Activated CD4-positive, alpha-beta memory T cell treated with anti-CD3 and anti-CD28 coated beads, Interleukin-2, amount 10 ng/mL, durations not matched to agents 7 days and 5 days (primary cell): ENCODE measurements at regions of chr2 and their contacts with region 1.

Region 1: DNA sequence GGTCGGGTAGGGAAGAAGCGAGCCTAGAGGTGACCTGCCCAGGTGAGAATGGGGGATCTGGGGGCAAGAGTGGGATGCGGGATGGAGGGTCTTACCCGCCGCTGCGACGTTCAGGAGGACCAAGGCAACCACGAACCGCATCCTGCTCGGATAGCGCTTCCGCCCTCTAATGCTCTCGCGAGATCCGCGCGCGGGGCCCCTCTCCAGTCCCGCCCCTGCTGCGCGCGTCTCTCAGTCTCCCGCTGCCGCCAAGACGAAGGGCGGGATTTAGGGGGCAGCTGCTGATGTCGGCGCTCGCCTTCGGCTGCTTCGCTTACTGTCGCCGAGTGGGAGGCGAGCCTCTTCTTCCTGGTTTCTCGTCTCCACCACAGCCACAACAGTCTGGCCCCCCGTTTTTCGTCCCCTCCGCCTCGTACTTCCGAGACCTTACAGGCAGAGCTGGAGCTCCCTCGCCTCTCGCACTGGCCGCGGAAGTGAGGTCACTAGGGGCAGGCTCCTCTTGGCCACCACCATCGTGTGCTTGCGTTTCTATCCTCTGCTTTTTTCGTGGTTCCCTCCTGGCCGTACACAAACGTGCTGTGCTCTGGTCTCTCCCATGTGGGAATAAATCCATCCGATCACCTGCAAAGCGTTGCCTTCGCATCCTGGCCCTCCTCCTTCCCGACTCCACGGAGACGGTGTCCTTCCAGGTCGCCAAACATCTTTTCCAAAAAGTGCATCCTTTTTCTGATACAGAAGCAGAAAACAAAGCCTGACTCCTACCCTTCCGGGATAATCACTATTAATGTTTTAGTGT is at the start of gene TGOLN2:
- DNase-seq: peak; percentile 95
- H3K4me3 Mint-ChIP-seq: peak within 1 kb of the TSS; percentile 93
- H3K27ac Mint-ChIP-seq: peak within 1 kb of the TSS; percentile 100
- H3K4me1 Mint-ChIP-seq: peaks cover 48% of the 10 kb centered on the region
- H3K27me3 Mint-ChIP-seq: no peaks in the 10 kb centered on the region
- total RNA-seq, gene TGOLN2: 129 to 131 TPM

Region 2: GRCh38 chr2:84970868-84971509 is 357.0 kb before region 1 on chr2 and contains the start of gene KCMF1:
- CTCF ChIA-PET with region 1: no interaction called
- POLR2A ChIA-PET with region 1: interaction called, 23 read pairs
- DNase-seq: peak; percentile 76
- H3K4me3 Mint-ChIP-seq: peak within 1 kb of the TSS; percentile 96
- H3K27ac Mint-ChIP-seq: peak within 1 kb of the TSS; percentile 100
- H3K4me1 Mint-ChIP-seq: peaks cover 47% of the 10 kb centered on the region
- H3K27me3 Mint-ChIP-seq: no peaks in the 10 kb centered on the region
- total RNA-seq, gene KCMF1: 87.0 to 92.9 TPM

Region 3: DNA sequence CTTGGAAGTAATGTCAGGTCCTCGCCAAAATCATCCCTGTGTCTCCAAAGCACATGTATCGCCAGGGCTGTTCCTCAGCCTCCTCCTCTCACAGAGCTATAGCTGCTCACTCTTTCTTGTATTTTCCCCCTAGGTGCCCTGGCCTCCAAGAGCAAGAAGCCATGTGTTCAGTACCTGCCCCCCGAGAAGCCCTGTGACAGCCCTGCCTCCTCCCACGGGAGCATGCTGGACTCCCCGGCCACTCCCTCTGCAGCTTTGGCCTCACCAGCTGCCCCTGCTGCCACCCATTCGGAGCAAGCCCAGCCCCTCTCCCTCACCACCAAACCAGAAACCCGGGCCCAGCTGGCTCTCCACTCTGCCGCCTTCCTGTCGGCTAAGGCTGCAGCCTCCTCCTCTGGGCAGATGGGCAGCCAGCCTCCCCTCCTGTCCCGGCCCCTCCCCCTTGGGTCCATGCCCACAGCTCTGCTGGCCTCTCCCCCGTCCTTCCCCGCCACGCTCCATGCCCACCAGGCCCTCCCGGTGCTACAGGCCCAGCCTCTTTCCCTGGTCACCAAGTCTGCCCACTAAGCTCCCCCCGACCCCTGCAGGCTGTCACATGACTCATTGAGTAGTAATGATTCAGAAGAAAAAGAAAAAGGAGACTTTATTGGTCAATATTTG is 19.0 kb before region 1 on chr2:
- CTCF ChIA-PET with region 1: no interaction called
- POLR2A ChIA-PET with region 1: interaction called, 29 read pairs
- DNase-seq: no peak
- H3K4me3 Mint-ChIP-seq: no peak overlapping the region
- H3K27ac Mint-ChIP-seq: no peak overlapping the region
- H3K4me1 Mint-ChIP-seq: peaks cover 33% of the 10 kb centered on the region
- H3K27me3 Mint-ChIP-seq: peaks cover 6% of the 10 kb centered on the region

Region 4: DNA sequence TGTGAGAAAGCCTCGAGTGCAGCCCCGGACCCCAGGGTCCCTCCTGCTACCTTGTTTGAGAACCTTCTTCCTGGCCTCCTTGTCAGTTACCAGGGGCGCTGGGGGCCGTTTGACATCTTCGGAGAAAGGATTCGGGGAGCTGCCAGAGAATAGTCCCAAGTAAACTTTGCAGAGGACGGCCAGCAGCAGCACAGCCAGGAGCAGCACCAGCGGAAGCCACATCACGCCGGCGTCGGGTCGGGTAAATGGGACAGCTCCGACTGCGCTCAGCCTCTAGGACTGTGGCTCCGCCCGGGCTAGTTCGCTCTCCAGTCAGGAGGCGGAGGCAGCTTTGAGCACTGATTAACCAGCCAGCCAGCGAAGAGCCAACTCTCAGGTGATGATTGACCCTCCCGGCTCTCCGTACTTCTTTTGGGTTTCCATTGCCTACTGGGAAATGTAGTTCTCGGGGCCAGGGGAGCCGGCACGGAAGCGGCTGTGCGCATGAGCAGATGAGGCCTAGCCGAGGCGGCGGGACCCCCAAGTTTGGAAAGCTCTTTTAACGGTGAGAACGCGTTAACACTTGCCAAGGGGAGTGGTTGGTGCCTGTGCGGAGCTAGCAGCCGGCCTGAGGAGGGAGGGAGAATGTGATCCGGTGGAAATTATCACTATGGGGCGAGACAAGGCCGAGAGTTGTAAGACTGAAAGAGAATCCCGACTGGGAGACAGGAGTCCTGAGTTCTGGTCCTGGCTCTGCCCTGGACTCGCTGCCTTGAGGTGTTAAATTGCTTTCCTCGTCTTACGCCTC is 26.5 kb after region 1 on chr2 and contains the starts of genes ELMOD3 and RETSAT:
- CTCF ChIA-PET with region 1: interaction called, 8 read pairs
- POLR2A ChIA-PET with region 1: interaction called, 234 read pairs
- DNase-seq: peak; percentile 98
- H3K4me3 Mint-ChIP-seq: peak within 1 kb of the TSS; percentile 99
- H3K27ac Mint-ChIP-seq: peak within 1 kb of the TSS; percentile 93
- H3K4me1 Mint-ChIP-seq: peaks cover 45% of the 10 kb centered on the region
- H3K27me3 Mint-ChIP-seq: no peaks in the 10 kb centered on the region
- total RNA-seq, gene ELMOD3: 19.2 to 19.4 TPM
- total RNA-seq, gene RETSAT: 30.1 to 31.1 TPM

Region 5: GRCh38 chr2:85383850-85384249 is 55.8 kb after region 1 on chr2:
- CTCF ChIA-PET with region 1: no interaction called
- POLR2A ChIA-PET with region 1: no interaction called
- DNase-seq: no peak
- H3K4me3 Mint-ChIP-seq: no peak overlapping the region
- H3K27ac Mint-ChIP-seq: no peak overlapping the region
- H3K4me1 Mint-ChIP-seq: no peaks in the 10 kb centered on the region
- H3K27me3 Mint-ChIP-seq: no peaks in the 10 kb centered on the region

Region 6: DNA sequence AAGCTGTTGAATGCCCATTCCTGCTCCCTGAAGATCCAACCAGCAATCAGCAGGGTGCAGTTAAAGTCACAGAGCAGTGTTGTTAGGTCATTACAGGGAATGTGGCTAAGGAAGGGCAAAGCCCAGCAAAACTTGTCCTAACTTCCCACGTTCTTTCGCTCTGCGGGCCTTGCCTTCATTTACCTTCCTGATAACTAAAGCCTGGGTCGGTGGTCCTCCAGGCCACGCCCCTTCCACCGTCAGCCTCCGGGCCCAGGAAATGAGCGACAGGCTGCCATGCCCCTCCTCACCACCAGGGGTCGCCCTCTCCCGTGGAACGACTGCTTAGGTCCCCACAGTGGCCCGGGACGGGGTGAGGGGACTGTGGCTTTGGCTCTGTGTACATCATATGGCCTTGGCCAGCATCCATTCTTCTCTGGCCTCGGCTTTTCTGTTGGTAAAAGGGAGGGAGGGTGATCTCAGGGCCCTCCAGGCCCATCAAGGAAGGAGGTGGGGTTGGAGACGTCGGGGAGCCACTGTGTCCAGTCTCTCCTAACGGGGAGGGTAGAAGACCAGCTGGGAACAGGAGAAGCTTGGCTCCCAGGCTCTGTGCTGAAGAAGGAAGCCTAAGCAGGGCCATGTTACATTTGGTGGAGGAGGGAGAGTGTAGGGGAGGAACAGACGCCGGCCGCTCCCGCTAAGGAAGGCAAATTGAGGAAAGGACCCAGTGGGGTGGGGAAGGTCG is 92.7 kb after region 1 on chr2:
- CTCF ChIA-PET with region 1: interaction called, 6 read pairs
- POLR2A ChIA-PET with region 1: interaction called, 24 read pairs
- DNase-seq: peak; percentile 92
- H3K4me3 Mint-ChIP-seq: peak overlapping the region; percentile 66
- H3K27ac Mint-ChIP-seq: peak overlapping the region; percentile 77
- H3K4me1 Mint-ChIP-seq: peaks cover 33% of the 10 kb centered on the region
- H3K27me3 Mint-ChIP-seq: no peaks in the 10 kb centered on the region

Region 7: DNA sequence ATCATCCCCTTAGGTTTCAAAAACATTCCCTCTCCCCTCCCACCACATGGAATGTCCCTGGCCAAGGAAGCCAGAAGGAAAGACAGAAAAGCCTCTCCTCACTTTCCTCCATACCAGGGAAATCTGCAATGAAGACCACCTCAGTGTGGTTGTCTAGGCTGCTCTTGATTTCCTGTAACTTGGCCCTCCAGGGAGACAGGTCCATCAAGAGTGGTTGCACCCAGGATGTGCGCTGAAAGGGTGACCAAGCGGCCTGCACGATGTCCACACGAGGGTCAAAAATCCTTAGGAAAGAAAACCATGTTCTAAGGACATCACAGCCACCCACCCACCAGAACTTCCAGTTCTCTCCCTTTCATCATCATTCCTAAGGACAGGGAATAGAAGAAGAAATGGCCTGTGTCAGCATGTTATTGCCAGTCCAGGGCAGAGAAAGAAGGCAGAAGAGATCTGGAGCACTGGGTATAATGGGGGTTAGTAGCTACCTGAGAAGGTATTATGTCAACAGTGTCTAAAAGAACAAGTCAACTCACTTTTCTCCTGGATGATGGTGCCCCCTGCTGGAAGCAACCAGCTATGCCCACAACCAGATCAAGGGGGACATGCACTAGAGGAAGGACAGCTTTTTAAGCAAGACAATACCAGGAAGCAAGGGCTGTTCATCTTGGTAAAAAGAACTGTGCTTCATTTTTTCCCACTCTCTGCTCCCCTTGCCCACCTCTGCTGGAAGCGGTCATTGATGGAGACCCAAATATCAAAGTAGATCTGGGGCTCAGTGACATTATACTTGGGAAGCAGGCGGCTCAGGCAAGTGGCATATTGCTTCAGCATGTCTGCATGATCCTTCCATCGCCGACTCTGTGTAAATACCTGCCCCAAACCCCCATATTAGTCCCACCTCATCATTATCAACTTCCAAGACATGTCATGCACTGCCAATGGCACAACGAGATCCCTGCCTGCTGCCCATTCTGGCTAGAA is 224.0 kb after region 1 on chr2:
- CTCF ChIA-PET with region 1: interaction called, 5 read pairs
- POLR2A ChIA-PET with region 1: interaction called, 12 read pairs
- DNase-seq: peak; percentile 91
- H3K4me3 Mint-ChIP-seq: no peak overlapping the region
- H3K27ac Mint-ChIP-seq: peak overlapping the region; percentile 7
- H3K4me1 Mint-ChIP-seq: peaks cover 5% of the 10 kb centered on the region
- H3K27me3 Mint-ChIP-seq: no peaks in the 10 kb centered on the region